WTC11 (cell line): ENCODE measurements at regions of chr14 and their contacts with region 1.

Region 1: DNA sequence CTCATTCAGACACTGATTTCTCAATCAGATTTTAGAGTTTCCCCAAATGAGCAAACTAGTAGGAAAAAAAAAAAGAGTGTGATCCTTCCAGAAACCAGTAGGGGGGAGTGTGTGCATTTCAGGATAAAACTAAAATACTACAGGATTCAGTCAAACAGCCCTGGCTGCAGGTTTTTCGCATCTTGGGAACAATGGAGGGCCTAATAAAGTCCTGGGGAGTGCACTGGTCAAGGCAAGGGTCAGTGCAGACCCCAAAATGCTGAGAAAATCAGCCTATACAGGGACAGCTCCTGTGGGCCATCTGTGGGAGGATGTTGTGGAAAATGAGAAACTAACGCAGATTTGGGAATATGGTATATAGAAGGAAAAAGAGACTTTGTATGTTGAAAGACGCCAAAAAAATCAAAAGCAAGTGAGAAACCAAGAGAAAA is 22.2 kb upstream of the ABCD4 start:
- DNase-seq: peak; percentile 24
- ATAC-seq: peak; percentile 4; the same call in 1 of the 2 replicates
- H3K4me3 Mint-ChIP-seq: peak overlapping the region; percentile 51
- H3K27ac Mint-ChIP-seq: peak overlapping the region; percentile 97
- H3K4me1 Mint-ChIP-seq: peaks cover 34% of the 10 kb centered on the region
- H3K27me3 Mint-ChIP-seq: no peaks in the 10 kb centered on the region
- CTCF ChIP-seq: peak; percentile 60

Region 2: DNA sequence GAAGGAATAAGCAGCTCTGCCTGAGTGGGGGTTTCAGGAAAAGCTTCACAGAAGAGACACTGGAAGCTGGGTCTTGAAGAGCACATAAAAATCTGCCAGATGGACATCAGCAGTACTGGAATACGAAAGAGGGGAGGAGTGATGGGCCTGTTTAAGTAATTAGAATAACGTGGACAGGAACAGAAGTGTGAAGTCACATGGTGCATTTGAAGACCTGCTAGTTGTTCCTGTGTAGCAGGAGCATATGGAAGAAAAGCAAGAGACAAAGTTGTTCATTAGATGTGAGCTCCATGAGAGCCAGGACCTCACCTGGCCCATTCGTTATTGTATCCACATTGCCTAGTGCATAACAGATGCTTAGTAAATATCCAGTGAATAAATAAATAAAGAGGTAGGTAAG is 155.0 kb before region 1 on chr14:
- CTCF ChIA-PET with region 1: no interaction called
- POLR2A ChIA-PET with region 1: no interaction called
- DNase-seq: no peak
- ATAC-seq: no peak
- H3K4me3 Mint-ChIP-seq: no peak overlapping the region
- H3K27ac Mint-ChIP-seq: no peak overlapping the region
- H3K4me1 Mint-ChIP-seq: no peaks in the 10 kb centered on the region
- H3K27me3 Mint-ChIP-seq: no peaks in the 10 kb centered on the region
- CTCF ChIP-seq: no peak

Region 3: GRCh38 chr14:74203639-74204038 is 121.3 kb before region 1 on chr14:
- CTCF ChIA-PET with region 1: no interaction called
- POLR2A ChIA-PET with region 1: no interaction called
- DNase-seq: no peak
- ATAC-seq: no peak
- H3K4me3 Mint-ChIP-seq: no peak overlapping the region
- H3K27ac Mint-ChIP-seq: no peak overlapping the region
- H3K4me1 Mint-ChIP-seq: no peaks in the 10 kb centered on the region
- H3K27me3 Mint-ChIP-seq: no peaks in the 10 kb centered on the region
- CTCF ChIP-seq: no peak

Region 4: GRCh38 chr14:74302634-74303577 is 22.0 kb before region 1 on chr14 and contains the start of gene ABCD4:
- CTCF ChIA-PET with region 1: interaction called, 6 read pairs
- POLR2A ChIA-PET with region 1: interaction called, 11 read pairs
- DNase-seq: peak; percentile 99
- ATAC-seq: peak; percentile 99
- H3K4me3 Mint-ChIP-seq: peak within 1 kb of the TSS; percentile 96
- H3K27ac Mint-ChIP-seq: peak within 1 kb of the TSS; percentile 98
- H3K4me1 Mint-ChIP-seq: peaks cover 7% of the 10 kb centered on the region
- H3K27me3 Mint-ChIP-seq: no peaks in the 10 kb centered on the region
- CTCF ChIP-seq: no peak
- total RNA-seq, gene ABCD4: 84.7 to 91.2 TPM (median 90.2 TPM) in 3 replicates

Region 5: GRCh38 chr14:74349757-74350156 is 24.8 kb after region 1 on chr14:
- CTCF ChIA-PET with region 1: interaction called, 32 read pairs
- POLR2A ChIA-PET with region 1: interaction called, 59 read pairs
- DNase-seq: no peak
- ATAC-seq: no peak
- H3K4me3 Mint-ChIP-seq: peak overlapping the region; percentile 93
- H3K27ac Mint-ChIP-seq: peak overlapping the region; percentile 85
- H3K4me1 Mint-ChIP-seq: peaks cover 50% of the 10 kb centered on the region
- H3K27me3 Mint-ChIP-seq: no peaks in the 10 kb centered on the region
- CTCF ChIP-seq: no peak

Region 6: GRCh38 chr14:74478996-74479635 is 154.2 kb after region 1 on chr14:
- CTCF ChIA-PET with region 1: interaction called, 20 read pairs
- POLR2A ChIA-PET with region 1: no interaction called
- DNase-seq: no peak
- ATAC-seq: peak; percentile 77
- H3K4me3 Mint-ChIP-seq: no peak overlapping the region
- H3K27ac Mint-ChIP-seq: no peak overlapping the region
- H3K4me1 Mint-ChIP-seq: peaks cover 5% of the 10 kb centered on the region
- H3K27me3 Mint-ChIP-seq: no peaks in the 10 kb centered on the region
- CTCF ChIP-seq: peak; percentile 78

Region 7: DNA sequence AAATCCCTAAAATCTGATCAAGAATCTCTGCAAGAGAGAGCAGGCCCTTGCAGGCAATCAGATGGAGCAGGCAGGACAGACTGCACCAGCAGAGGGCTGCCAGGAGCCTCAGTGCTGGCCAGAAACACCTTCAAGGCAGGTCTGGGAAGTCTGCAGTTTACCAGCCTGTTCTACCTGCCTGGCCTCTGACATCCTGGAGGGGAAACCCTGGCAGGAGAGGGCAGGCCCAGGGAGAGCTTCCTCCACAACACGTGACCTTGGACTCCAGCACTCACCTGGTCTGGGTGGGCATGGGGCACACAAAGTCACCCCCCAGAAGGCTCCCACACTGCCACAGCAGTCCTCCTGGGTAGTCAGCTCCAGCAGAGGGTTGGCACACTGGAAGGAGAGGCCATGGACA is 224.6 kb after region 1 on chr14:
- CTCF ChIA-PET with region 1: no interaction called
- POLR2A ChIA-PET with region 1: no interaction called
- DNase-seq: no peak
- ATAC-seq: peak; percentile 66
- H3K4me3 Mint-ChIP-seq: no peak overlapping the region
- H3K27ac Mint-ChIP-seq: no peak overlapping the region
- H3K4me1 Mint-ChIP-seq: peaks cover 13% of the 10 kb centered on the region
- H3K27me3 Mint-ChIP-seq: no peaks in the 10 kb centered on the region
- CTCF ChIP-seq: no peak